Cardiac septum (tissue), 1 donor: ENCODE measurements at regions of chr2 and their contacts with region 1.

Region 1: DNA sequence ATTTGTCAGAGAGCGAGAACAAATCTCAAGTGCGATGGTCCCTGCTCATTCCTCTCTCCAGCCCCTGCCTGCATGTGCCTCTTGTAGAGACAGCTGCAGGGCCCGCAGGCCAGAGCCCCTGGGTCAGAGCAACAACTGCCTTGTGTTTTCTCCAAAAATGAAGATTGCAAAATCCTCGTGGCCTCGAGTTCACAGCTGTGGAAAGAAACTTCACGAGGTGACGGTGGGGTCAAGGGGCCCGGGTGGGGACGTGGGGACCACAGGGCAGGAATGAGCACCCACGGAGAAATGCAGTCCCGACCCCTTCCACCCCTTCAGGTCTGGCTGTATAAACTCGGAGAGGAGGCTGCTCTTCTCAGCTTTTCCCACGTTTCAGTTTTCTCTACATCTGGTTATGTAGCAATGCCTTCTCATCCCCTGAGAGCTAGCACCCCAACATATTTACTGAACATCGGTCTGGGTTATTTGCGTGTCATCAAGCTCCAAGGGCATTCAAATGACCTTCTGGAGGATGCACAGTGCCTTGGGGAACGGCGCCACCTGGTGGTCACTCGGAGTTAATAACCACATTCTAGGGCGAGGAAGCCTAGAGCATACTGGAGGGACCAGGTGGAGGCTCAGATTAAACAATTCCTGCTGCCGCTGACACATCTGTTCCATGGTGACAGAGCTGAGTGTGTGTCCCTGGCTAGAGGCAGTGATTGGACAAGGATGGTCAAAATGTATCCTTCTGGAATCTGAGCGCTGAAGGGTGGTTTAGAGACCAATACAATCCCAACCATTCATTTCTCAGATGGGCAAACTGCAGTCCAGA is 91.4 kb upstream of the CYRIA start:
- DNase-seq: peak; percentile 91

Region 2: DNA sequence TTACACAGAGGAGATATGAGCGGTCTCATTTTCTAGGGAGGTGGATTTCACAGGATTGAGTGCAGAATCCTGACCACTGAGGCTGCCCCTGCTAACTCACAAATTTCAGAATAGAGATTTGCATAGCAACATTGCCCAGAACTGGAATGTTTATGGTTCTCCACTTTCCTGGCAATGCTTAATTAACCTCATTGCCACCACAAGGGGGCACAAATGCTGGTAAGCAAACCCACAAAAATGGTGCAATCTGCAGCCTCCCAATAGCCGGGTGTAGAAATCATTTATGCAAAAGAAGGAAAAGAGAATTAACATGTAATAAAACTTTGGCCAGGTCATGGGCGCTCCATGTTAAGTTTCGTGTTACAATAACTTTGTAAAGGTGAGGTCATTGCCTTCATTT is 203.8 kb before region 1 on chr2:
- intact Hi-C with region 1: loop called (anchors 2 kb)
- DNase-seq: no peak

Region 3: DNA sequence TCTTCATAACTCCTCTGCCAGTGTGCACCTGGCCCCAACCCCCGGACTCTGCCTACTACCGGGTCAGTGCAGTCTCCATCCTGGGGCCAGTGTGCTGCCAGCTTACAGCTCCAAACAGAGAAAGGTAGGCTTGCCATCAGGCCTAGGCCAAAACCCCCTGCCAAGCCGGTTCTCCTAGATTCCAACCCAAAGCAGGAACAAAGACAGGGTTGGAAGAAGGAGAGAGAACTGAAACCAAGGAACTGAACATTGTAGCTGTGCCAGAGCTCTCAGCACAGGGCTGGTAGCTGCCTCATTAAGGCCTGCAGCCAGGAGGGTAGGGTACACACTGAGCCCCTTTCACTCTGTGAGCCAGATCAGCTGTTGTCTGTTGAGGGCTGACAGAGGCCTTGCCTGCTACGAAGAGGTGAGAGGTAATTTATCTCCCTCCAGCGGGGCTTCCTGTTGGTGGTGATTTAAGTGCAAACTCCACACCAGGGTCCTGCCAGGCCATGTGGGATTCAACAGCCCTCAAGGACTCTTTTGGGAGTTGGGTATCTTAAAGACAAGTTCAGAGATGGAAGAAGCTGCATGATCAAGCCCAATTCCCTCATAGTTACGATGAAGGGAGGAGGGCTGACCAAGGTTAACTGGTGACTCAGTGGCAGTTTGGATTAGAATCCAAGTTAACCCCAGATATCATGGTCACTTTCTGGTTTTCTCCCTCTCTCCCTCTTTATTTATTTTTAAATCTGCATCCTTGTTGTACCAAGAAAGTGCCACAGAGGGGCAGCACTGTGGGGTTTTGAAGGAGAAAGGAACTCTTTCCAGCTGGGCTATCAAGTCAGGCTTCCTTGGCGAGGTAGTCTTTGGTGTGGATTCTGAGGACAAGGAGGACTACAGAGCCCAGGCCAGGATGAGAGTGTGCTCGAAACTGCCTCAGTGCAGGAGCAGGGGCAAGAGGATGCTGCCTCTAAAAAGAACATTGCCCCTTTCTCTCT is 139.5 kb before region 1 on chr2:
- intact Hi-C with region 1: loop called (anchors 2 kb)
- DNase-seq: no peak